Heart right ventricle (tissue), 16 donors: ENCODE measurements at regions of chrX and their contacts with region 1.

Region 1: DNA sequence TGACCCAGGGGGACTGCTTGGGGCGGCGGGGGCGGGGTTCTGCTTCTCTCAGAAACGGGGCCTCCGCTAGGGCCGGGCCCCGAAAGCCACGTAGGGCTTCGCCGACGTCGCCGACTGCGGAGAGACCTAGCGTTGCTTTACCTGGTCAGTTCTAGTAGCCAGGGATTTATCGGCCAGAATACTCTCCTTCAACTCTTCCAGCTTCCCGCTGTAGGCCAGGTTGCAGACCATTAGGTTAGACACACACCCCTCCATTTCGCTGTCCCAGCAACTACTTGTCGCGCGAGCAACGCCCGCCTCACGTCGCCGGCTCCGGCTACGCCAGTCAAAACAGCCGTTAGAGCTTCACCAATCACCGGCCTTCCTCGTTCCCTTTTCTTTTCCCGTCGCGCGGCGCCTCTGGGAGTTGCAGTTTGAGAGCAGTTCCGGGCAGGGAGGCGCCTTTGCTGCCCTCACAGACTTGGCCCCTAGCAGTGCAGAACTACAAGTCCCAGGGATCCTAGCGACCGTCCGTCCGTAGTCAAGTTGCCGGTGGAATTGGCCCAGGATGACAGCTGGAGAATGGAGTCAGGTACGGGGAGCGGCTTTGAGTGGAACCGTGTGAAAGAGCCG is at the starts of genes ATG4A and PSMD10:
- DNase-seq: peak; percentile 89 to 94
- ATAC-seq: peak; percentile 98 to 99 (median 98)
- H3K4me3 ChIP-seq: peak within 1 kb of the TSS; percentile 35 to 83 (median 69)
- H3K27ac ChIP-seq: peak within 1 kb of the TSS; percentile 50 to 90 (median 86)
- H3K4me1 ChIP-seq: peaks cover 0 to 32% (median 7%) of the 10 kb centered on the region in 9 donors
- H3K27me3 ChIP-seq: peaks cover 0 to 11% (median 0%) of the 10 kb centered on the region in 7 donors
- CTCF ChIP-seq: no peak
- total RNA-seq, gene ATG4A: 13.1 to 20.5 (median 17.3) TPM
- total RNA-seq, gene PSMD10: 16.5 to 27.0 (median 21.2) TPM

Region 2: GRCh38 chrX:107880054-107880610 is 211.2 kb before region 1 on chrX:
- intact Hi-C with region 1: no loop called
- DNase-seq: no peak
- ATAC-seq: no peak
- H3K4me3 ChIP-seq: no peak overlapping the region
- H3K27ac ChIP-seq: no peak overlapping the region
- H3K4me1 ChIP-seq: no peaks in the 10 kb centered on the region
- H3K27me3 ChIP-seq: peaks cover 0 to 25% (median 0%) of the 10 kb centered on the region in 7 donors
- CTCF ChIP-seq: no peak

Region 3: GRCh38 chrX:108131471-108131870 is 40.1 kb after region 1 on chrX:
- intact Hi-C with region 1: loop called in 3 of 10 experiments (anchors 5 kb)
- DNase-seq: peak in 1 of 2 donors; percentile 6
- ATAC-seq: peak; percentile 38 to 93 (median 78)
- H3K4me3 ChIP-seq: no peak overlapping the region
- H3K27ac ChIP-seq: peak overlapping the region in 8 of 10 donors; percentile 28 to 81 (median 68)
- H3K4me1 ChIP-seq: peaks cover 0 to 14% (median 0%) of the 10 kb centered on the region in 9 donors
- H3K27me3 ChIP-seq: peaks cover 0 to 29% (median 0%) of the 10 kb centered on the region in 7 donors
- CTCF ChIP-seq: no peak

Region 4: DNA sequence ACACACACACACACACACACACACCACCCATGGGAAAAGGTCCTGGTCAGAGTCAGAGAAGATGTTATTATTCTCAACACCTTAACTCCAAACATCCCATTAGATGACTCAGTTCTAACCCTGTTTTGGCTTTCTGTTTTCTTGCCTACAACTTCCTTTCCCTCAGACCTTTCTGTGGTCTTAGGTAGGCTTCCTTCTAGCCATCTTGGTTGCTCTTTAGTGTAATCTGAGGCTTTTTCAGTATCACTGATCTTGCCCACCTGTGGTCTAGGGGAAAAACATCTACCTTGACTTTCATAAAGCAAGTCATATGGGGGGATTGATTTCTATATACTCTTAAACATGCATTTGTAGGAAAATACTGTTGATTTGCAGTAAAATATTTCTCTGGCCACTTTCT is 57.2 kb after region 1 on chrX:
- intact Hi-C with region 1: loop called in 1 of 10 experiments (anchors 10 kb)
- DNase-seq: no peak
- ATAC-seq: no peak
- H3K4me3 ChIP-seq: no peak overlapping the region
- H3K27ac ChIP-seq: no peak overlapping the region
- H3K4me1 ChIP-seq: no peaks in the 10 kb centered on the region
- H3K27me3 ChIP-seq: peaks cover 0 to 6% (median 0%) of the 10 kb centered on the region in 7 donors
- CTCF ChIP-seq: no peak